ENCODE measurements at regions of chr18 and their contacts with region 1.

Region 1: DNA sequence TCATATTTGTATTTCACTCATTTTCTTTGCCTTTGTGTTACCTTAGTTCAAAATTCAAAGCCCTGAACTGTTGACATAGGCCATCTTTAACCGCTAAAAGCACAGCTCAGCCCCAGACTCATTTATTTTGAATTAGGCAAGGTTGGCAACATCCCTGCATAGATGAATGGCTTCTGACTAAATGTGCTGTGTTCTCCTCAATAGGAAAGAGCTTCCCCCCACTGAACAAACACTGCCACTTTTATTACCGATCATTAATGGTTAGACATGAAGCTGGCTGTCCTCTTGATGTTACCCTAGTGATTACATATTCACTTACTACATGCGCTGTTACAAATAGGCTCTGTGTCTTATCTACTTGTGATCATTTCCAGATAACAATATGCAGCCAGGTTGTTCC is 170.7 kb downstream of the ADCYAP1 start:
- DNase-seq: no peak
- ATAC-seq: no peak
- H3K4me3 ChIP-seq: no peak overlapping the region
- H3K27ac ChIP-seq: no peak overlapping the region
- H3K4me1 ChIP-seq: no peaks in the 10 kb centered on the region
- H3K27me3 ChIP-seq: no peaks in the 10 kb centered on the region
- CTCF ChIP-seq: no peak
- POLR2A ChIP-seq: no peak

Region 2: GRCh38 chr18:1304392-1304974 is 229.2 kb after region 1 on chr18:
- intact Hi-C with region 1: no loop called
- DNase-seq: no peak
- ATAC-seq: no peak
- H3K4me3 ChIP-seq: no peak overlapping the region
- H3K27ac ChIP-seq: no peak overlapping the region
- H3K4me1 ChIP-seq: no peaks in the 10 kb centered on the region
- H3K27me3 ChIP-seq: no peaks in the 10 kb centered on the region
- CTCF ChIP-seq: no peak
- POLR2A ChIP-seq: no peak

Region 3: GRCh38 chr18:1618364-1618763 is 543.0 kb after region 1 on chr18:
- intact Hi-C with region 1: loop called in 1 of 10 experiments (anchors 10 kb)
- DNase-seq: no peak
- ATAC-seq: no peak
- H3K4me3 ChIP-seq: no peak overlapping the region
- H3K27ac ChIP-seq: no peak overlapping the region
- H3K4me1 ChIP-seq: no peaks in the 10 kb centered on the region
- H3K27me3 ChIP-seq: no peaks in the 10 kb centered on the region
- CTCF ChIP-seq: no peak
- POLR2A ChIP-seq: no peak

Measured in heart left ventricle (tissue), 16 donors.